Posterior vena cava (tissue), 2 donors: ENCODE measurements at regions of chr2 and their contacts with region 1.

Region 1: GRCh38 chr2:72669121-72669520 is 156.7 kb downstream of the EXOC6B start:
- DNase-seq: no peak

Region 2: GRCh38 chr2:72399879-72400278 is 269.2 kb before region 1 on chr2:
- intact Hi-C with region 1: loop called in 1 of 2 experiments (anchors 5 kb)
- DNase-seq: no peak

Region 3: GRCh38 chr2:72548081-72548764 is 120.9 kb before region 1 on chr2:
- intact Hi-C with region 1: no loop called
- DNase-seq: no peak